ENCODE measurements at regions of chr4 and their contacts with region 1.

Region 1: DNA sequence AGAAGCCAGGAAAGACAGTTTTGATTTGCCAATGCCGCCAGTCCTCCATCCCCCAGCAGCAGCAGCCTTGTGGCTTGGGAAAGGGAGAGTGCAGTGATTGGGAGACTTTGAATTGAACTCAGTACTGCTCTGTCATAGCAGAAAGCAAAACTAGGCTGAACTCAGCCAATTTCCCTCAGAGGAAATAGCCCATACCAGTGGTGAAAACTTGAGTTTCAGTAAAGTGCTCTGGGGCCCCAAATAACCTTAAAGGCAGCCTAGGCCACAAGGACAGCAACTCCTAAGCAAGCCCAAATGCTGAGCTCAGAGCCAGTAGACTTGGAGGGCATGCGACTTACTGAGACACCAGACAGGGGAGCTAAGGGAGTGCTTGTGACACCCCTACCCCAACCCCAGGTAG is 2.0 kb upstream of the PROM1 start:
- DNase-seq: no peak
- H3K4me3 ChIP-seq: no peak overlapping the region
- H3K27ac ChIP-seq: no peak overlapping the region
- H3K4me1 ChIP-seq: peaks cover 18% of the 10 kb centered on the region
- H3K27me3 ChIP-seq: peaks cover 38% of the 10 kb centered on the region
- CTCF ChIP-seq: no peak

Region 2: DNA sequence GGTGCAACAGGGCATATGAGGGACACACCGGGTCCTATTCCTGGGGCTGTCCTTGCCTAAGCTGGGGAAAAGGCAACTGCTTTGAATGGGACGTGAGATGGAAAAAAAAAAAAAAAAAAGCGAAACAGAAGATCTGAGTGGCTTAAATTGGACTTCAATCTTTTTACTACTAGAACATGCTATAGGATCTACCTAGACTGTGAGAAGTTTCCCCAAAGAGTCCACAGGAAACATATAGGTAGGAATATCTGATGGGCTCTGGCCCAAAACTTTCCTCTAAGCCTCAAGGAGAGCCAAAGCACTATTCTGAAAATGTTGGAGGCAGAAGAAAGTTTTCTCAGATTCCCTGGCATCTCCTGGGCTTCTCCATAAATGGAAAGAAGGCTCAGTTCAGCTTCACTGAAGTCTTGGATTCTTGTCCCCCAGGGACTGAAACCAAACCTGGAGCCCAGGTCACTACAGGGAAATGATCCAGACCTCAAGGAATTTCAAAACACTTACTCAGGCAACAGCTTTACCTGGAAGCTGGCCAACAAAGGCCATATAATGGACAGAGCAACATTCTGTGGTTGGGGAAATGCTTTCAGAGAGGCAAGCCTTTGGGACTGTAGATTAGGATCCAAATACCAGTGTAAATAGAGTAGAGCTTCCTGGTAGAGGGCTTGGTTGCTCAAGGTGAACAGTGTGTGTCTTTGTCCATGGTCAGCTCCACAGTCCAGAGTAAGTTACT is 54.9 kb after region 1 on chr4:
- CTCF ChIA-PET with region 1: no interaction called
- dilution Hi-C with region 1: no loop called
- in situ Hi-C with region 1: no loop called
- intact Hi-C with region 1: loop called (anchors 5 kb)
- DNase-seq: peak; percentile 95
- H3K4me3 ChIP-seq: no peak overlapping the region
- H3K27ac ChIP-seq: no peak overlapping the region
- H3K4me1 ChIP-seq: peaks cover 13% of the 10 kb centered on the region
- H3K27me3 ChIP-seq: no peaks in the 10 kb centered on the region
- CTCF ChIP-seq: no peak

Measured in mammary epithelial cell (primary cell).